ENCODE measurements at regions of chr4 and their contacts with region 1.

Region 1: DNA sequence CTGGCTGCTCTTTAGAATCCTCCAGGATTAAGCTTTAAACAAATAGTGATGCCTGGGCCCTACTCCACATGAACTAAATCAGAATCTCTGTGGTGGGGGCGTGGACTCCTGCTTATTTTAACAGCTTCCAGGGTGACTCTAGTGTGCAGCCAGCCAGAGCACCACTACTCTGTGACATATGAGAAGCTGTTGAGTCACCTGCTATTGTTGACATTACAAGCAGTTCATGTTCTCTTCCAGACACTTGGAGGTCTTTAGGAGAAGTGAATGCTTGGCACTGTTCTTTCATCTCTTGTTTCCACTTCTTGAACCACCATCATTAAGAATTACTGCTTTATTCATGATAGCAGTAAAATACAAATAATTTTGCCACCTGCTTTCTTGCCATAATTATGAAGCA is 426 bp upstream of the C4orf51 start:
- DNase-seq: peak; percentile 80
- ATAC-seq: peak; percentile 97 to 99
- H3K4me3 ChIP-seq: peak overlapping the region in 2 of 4 donors; percentile 31 to 32
- H3K27ac ChIP-seq: peak overlapping the region; percentile 79 to 91 (median 82)
- H3K4me1 ChIP-seq: peaks cover 25 to 36% of the 10 kb centered on the region in 2 donors
- H3K27me3 ChIP-seq: no peaks in the 10 kb centered on the region
- CTCF ChIP-seq: no peak
- POLR2A ChIP-seq: no peak

Region 2: GRCh38 chr4:145501051-145501660 is 178.4 kb before region 1 on chr4:
- in situ Hi-C with region 1: no loop called
- intact Hi-C with region 1: no loop called
- DNase-seq: no peak
- ATAC-seq: peak in 1 of 2 donors; percentile 55
- H3K4me3 ChIP-seq: no peak overlapping the region
- H3K27ac ChIP-seq: peak overlapping the region in 3 of 4 donors; percentile 47 to 66 (median 53)
- H3K4me1 ChIP-seq: peaks cover 40 to 53% of the 10 kb centered on the region in 2 donors
- H3K27me3 ChIP-seq: no peaks in the 10 kb centered on the region
- CTCF ChIP-seq: no peak
- POLR2A ChIP-seq: no peak

Region 3: GRCh38 chr4:145697332-145697731 is 17.8 kb after region 1 on chr4:
- in situ Hi-C with region 1: no loop called
- intact Hi-C with region 1: loop called (anchors 2 kb)
- DNase-seq: no peak
- ATAC-seq: no peak
- H3K4me3 ChIP-seq: no peak overlapping the region
- H3K27ac ChIP-seq: no peak overlapping the region
- H3K4me1 ChIP-seq: peaks cover 9 to 11% of the 10 kb centered on the region in 2 donors
- H3K27me3 ChIP-seq: no peaks in the 10 kb centered on the region
- CTCF ChIP-seq: no peak
- POLR2A ChIP-seq: no peak

Region 4: GRCh38 chr4:145755802-145756201 is 76.3 kb after region 1 on chr4:
- in situ Hi-C with region 1: no loop called
- intact Hi-C with region 1: no loop called
- DNase-seq: no peak
- ATAC-seq: peak; percentile 72 to 74
- H3K4me3 ChIP-seq: no peak overlapping the region
- H3K27ac ChIP-seq: no peak overlapping the region
- H3K4me1 ChIP-seq: peaks cover 0 to 9% of the 10 kb centered on the region in 2 donors
- H3K27me3 ChIP-seq: no peaks in the 10 kb centered on the region
- CTCF ChIP-seq: no peak
- POLR2A ChIP-seq: no peak

Region 5: GRCh38 chr4:145799223-145799622 is 119.7 kb after region 1 on chr4:
- in situ Hi-C with region 1: no loop called
- intact Hi-C with region 1: loop called (anchors 2 kb)
- DNase-seq: no peak
- ATAC-seq: no peak
- H3K4me3 ChIP-seq: no peak overlapping the region
- H3K27ac ChIP-seq: peak overlapping the region; percentile 82 to 90 (median 86)
- H3K4me1 ChIP-seq: peaks cover 45 to 48% of the 10 kb centered on the region in 2 donors
- H3K27me3 ChIP-seq: no peaks in the 10 kb centered on the region
- CTCF ChIP-seq: no peak
- POLR2A ChIP-seq: no peak

Region 6: DNA sequence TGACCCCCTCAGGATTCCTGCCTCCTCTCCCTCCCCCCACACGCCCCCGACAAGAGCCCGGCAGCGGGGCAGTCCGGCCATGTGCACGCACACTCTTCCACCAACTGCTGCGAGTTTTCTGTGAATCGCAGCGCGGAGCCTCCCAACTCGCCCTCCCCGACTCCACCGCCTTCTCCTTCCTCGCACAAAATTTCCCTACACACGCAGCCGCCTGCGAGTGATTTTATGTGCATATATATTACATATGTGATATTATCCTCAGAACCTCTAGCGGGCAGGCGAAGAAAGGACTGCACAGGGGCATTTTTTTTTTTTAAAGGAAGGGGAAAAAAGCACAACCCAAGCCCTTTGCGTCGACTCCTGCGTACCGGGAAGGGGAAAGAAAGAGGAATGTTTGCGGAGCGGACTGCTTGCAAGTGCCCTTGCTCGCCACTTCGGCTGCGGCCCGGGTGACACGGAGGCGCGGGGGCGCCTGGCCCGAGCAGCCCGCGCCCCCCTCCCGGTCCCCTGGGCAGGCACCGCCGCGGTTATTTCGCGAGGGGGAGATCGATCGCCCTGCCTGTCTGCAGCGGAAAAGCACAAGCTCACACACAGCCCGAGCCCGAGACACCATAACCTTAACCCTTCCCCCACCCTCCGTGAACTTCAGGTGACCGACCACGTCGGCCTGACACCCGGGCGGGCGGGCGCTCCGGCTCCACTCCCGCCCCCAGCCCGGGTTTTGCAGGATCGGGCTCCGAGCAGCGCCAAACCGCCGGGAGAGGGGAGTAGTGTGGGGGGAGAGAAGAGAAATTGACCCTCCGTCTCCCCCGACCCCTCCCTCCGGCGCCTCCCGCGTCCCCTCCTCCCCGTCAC is 256.8 kb after region 1 on chr4:
- in situ Hi-C with region 1: no loop called
- intact Hi-C with region 1: loop called (anchors 5 kb)
- DNase-seq: peak; percentile 56 to 79
- ATAC-seq: peak; percentile 67 to 73
- H3K4me3 ChIP-seq: peak overlapping the region; percentile 71 to 90 (median 84)
- H3K27ac ChIP-seq: peak overlapping the region; percentile 91 to 99 (median 94)
- H3K4me1 ChIP-seq: peaks cover 25 to 34% of the 10 kb centered on the region in 2 donors
- H3K27me3 ChIP-seq: no peaks in the 10 kb centered on the region
- CTCF ChIP-seq: peak in 4 of 5 experiments; percentile 23 to 41 (median 34)
- POLR2A ChIP-seq: peak in 1 of 2 donors; percentile 53

Measured in gastrocnemius medialis (tissue), 4 donors.